ENCODE measurements at regions of chr2 and their contacts with region 1.

Region 1: GRCh38 chr2:201231781-201232466 is 28.4 kb upstream of the CASP8 start:
- DNase-seq: peak; percentile 85 to 93 (median 89)
- H3K4me3 ChIP-seq: peak overlapping the region; percentile 33
- H3K4me3 Mint-ChIP-seq: peak overlapping the region; percentile 74 to 99 (median 96)
- H3K27ac ChIP-seq: peak overlapping the region; percentile 13
- H3K27ac Mint-ChIP-seq: peak overlapping the region; percentile 49 to 89 (median 84)
- H3K4me1 ChIP-seq: peaks cover 49% of the 10 kb centered on the region
- H3K4me1 Mint-ChIP-seq: peaks cover 44 to 54% (median 47%) of the 10 kb centered on the region in 3 donors
- H3K27me3 ChIP-seq: no peaks in the 10 kb centered on the region
- H3K27me3 Mint-ChIP-seq: no peaks in the 10 kb centered on the region

Region 2: GRCh38 chr2:200864176-200864976 is 367.5 kb before region 1 on chr2 and contains the start of gene CLK1:
- CTCF ChIA-PET with region 1: interaction called, 12 read pairs
- POLR2A ChIA-PET with region 1: interaction called, 9 read pairs
- DNase-seq: peak; percentile 92 to 98 (median 94)
- H3K4me3 ChIP-seq: peak within 1 kb of the TSS; percentile 100
- H3K4me3 Mint-ChIP-seq: peak within 1 kb of the TSS; percentile 92 to 99 (median 94)
- H3K27ac ChIP-seq: peak within 1 kb of the TSS; percentile 100
- H3K27ac Mint-ChIP-seq: peak within 1 kb of the TSS; percentile 92 to 100 (median 100)
- H3K4me1 ChIP-seq: peaks cover 28% of the 10 kb centered on the region
- H3K4me1 Mint-ChIP-seq: peaks cover 41 to 51% (median 49%) of the 10 kb centered on the region in 3 donors
- H3K27me3 ChIP-seq: no peaks in the 10 kb centered on the region
- H3K27me3 Mint-ChIP-seq: peaks cover 0 to 20% of the 10 kb centered on the region in 2 donors
- total RNA-seq, gene CLK1: 110 to 114 TPM

Region 3: GRCh38 chr2:201158111-201158929 is 73.6 kb before region 1 on chr2:
- CTCF ChIA-PET with region 1: interaction called, 16 read pairs
- POLR2A ChIA-PET with region 1: no interaction called
- DNase-seq: peak; percentile 14 to 77 (median 56)
- H3K4me3 ChIP-seq: no peak overlapping the region
- H3K4me3 Mint-ChIP-seq: peak overlapping the region in 2 of 7 donors; percentile 6 to 45
- H3K27ac ChIP-seq: no peak overlapping the region
- H3K27ac Mint-ChIP-seq: peak overlapping the region; percentile 72 to 97 (median 90)
- H3K4me1 ChIP-seq: peaks cover 9% of the 10 kb centered on the region
- H3K4me1 Mint-ChIP-seq: peaks cover 14 to 32% (median 30%) of the 10 kb centered on the region in 3 donors
- H3K27me3 ChIP-seq: no peaks in the 10 kb centered on the region
- H3K27me3 Mint-ChIP-seq: no peaks in the 10 kb centered on the region

Region 4: DNA sequence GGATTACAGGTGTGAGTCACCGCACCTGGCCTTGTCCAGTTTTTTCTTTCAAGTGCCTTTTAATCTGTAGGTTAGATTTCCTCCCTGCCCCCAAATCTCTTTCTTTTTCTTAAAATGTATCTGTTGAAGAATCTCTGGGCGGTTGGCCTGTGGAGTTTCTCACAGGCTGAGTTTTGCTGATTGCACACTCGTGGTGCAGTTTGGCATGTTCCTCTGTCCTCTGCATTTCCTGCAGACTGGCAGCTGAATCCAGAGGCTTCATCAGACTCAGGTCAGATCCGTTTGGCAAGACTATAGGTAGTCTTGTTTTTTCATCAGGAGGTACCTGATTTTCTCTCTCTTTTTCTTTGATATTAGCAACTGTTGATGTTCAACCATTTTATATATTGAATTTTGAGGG is 43.5 kb before region 1 on chr2:
- CTCF ChIA-PET with region 1: interaction called, 74 read pairs
- POLR2A ChIA-PET with region 1: interaction called, 21 read pairs
- DNase-seq: no peak
- H3K4me3 ChIP-seq: no peak overlapping the region
- H3K4me3 Mint-ChIP-seq: peak overlapping the region in 2 of 7 donors; percentile 16 to 43
- H3K27ac ChIP-seq: no peak overlapping the region
- H3K27ac Mint-ChIP-seq: peak overlapping the region; percentile 29 to 91 (median 72)
- H3K4me1 ChIP-seq: peaks cover 70% of the 10 kb centered on the region
- H3K4me1 Mint-ChIP-seq: peaks cover 69 to 86% (median 81%) of the 10 kb centered on the region in 3 donors
- H3K27me3 ChIP-seq: no peaks in the 10 kb centered on the region
- H3K27me3 Mint-ChIP-seq: no peaks in the 10 kb centered on the region

Region 5: GRCh38 chr2:201208563-201209252 is 23.2 kb before region 1 on chr2:
- CTCF ChIA-PET with region 1: interaction called, 21 read pairs
- POLR2A ChIA-PET with region 1: no interaction called
- DNase-seq: no peak
- H3K4me3 ChIP-seq: no peak overlapping the region
- H3K4me3 Mint-ChIP-seq: no peak overlapping the region
- H3K27ac ChIP-seq: no peak overlapping the region
- H3K27ac Mint-ChIP-seq: peak overlapping the region in 3 of 8 donors; percentile 66 to 76 (median 70)
- H3K4me1 ChIP-seq: peaks cover 28% of the 10 kb centered on the region
- H3K4me1 Mint-ChIP-seq: peaks cover 15 to 27% (median 16%) of the 10 kb centered on the region in 3 donors
- H3K27me3 ChIP-seq: no peaks in the 10 kb centered on the region
- H3K27me3 Mint-ChIP-seq: no peaks in the 10 kb centered on the region

Region 6: DNA sequence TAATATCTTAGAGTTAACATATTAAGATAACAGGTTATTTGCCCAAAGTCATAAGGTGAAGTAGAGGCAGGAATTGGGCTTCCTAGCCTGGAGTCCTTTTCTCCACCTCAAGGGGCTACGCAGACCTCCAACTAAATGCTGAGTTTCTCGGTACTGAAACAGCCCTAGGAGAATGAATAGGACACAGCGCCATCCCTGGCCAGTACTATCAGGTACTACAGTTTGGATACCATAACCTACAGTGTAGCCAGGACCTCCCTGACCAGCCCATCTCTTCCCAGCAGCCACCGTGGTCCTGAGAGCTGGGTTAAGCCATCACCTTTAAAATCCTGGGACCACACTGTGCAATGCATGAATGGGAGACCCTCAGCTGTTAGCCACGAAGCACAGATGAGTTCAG is 44.1 kb after region 1 on chr2:
- CTCF ChIA-PET with region 1: interaction called, 185 read pairs
- POLR2A ChIA-PET with region 1: no interaction called
- DNase-seq: no peak
- H3K4me3 ChIP-seq: no peak overlapping the region
- H3K4me3 Mint-ChIP-seq: no peak overlapping the region
- H3K27ac ChIP-seq: no peak overlapping the region
- H3K27ac Mint-ChIP-seq: peak overlapping the region in 6 of 8 donors; percentile 25 to 87 (median 56)
- H3K4me1 ChIP-seq: peaks cover 45% of the 10 kb centered on the region
- H3K4me1 Mint-ChIP-seq: peaks cover 61 to 84% (median 83%) of the 10 kb centered on the region in 3 donors
- H3K27me3 ChIP-seq: no peaks in the 10 kb centered on the region
- H3K27me3 Mint-ChIP-seq: no peaks in the 10 kb centered on the region

Region 7: GRCh38 chr2:201363857-201364560 is 132.1 kb after region 1 on chr2:
- CTCF ChIA-PET with region 1: interaction called, 55 read pairs
- POLR2A ChIA-PET with region 1: interaction called, 4 read pairs
- DNase-seq: peak in 3 of 5 donors; percentile 8 to 60 (median 38)
- H3K4me3 ChIP-seq: no peak overlapping the region
- H3K4me3 Mint-ChIP-seq: peak overlapping the region in 1 of 7 donors; percentile 68
- H3K27ac ChIP-seq: no peak overlapping the region
- H3K27ac Mint-ChIP-seq: peak overlapping the region in 3 of 8 donors; percentile 32 to 72 (median 36)
- H3K4me1 ChIP-seq: peaks cover 15% of the 10 kb centered on the region
- H3K4me1 Mint-ChIP-seq: peaks cover 25 to 47% (median 35%) of the 10 kb centered on the region in 3 donors
- H3K27me3 ChIP-seq: no peaks in the 10 kb centered on the region
- H3K27me3 Mint-ChIP-seq: no peaks in the 10 kb centered on the region

Region 8: DNA sequence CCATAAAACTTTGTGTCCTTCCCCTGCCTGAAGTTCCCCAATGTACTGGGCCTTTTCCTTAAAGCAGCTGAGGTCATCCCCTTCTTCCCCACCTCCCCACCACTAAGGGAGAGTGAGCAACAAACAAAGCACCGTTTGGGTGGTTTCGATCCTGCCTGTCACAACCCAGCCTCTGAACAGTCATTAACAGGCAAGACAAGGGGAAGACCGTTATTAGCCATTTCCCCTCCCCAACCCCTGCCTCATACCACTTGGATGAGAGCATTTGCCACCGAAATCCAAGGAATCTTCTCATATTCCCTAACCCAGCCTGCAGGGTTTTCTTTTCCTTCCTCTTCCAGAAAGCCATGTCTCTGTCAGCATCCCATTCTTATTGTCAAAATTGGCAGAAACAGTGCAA is 285.2 kb after region 1 on chr2:
- CTCF ChIA-PET with region 1: no interaction called
- POLR2A ChIA-PET with region 1: no interaction called
- DNase-seq: no peak
- H3K4me3 ChIP-seq: no peak overlapping the region
- H3K4me3 Mint-ChIP-seq: no peak overlapping the region
- H3K27ac ChIP-seq: no peak overlapping the region
- H3K27ac Mint-ChIP-seq: peak overlapping the region in 1 of 8 donors; percentile 50
- H3K4me1 ChIP-seq: no peaks in the 10 kb centered on the region
- H3K4me1 Mint-ChIP-seq: no peaks in the 10 kb centered on the region
- H3K27me3 ChIP-seq: no peaks in the 10 kb centered on the region
- H3K27me3 Mint-ChIP-seq: peaks cover 9 to 13% of the 10 kb centered on the region in 2 donors